GM18951 (cell line): ENCODE measurements at regions of chr3 and their contacts with region 1.

Region 1: DNA sequence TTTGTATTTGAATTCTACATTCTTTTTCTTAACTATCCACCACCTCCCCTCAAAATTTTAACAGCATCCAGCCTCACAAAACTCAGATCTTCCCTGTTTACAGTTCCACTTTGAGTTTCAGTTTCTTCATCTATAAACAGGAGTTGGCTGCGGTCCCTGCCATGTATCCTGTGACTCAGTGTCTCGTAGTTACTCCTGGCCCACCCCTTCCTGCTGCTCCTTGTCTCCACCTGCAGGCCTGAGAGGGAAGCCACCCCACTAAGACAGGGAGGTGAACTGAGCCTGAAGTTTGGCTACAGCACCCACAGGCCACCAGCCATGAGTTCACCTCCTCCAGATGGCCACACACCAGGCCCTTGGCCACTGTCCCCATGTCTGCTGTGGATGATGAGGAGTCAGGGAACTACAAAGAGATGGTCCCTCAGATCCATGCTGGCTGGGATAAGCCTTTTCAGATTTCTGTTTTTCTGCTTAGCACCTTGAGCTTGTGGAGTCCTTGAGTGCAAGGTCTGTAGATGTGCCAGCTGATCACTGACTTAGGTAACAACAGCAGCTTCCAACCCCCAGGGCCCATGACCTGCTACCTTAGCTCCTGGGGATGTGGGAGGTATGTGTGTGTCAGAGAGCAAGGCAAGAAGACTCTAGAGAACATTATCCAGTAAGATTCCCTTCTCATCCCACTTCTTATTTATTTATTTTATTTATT is 37.5 kb downstream of the CD86 start:
- POLR2A ChIP-seq: no peak

Region 2: DNA sequence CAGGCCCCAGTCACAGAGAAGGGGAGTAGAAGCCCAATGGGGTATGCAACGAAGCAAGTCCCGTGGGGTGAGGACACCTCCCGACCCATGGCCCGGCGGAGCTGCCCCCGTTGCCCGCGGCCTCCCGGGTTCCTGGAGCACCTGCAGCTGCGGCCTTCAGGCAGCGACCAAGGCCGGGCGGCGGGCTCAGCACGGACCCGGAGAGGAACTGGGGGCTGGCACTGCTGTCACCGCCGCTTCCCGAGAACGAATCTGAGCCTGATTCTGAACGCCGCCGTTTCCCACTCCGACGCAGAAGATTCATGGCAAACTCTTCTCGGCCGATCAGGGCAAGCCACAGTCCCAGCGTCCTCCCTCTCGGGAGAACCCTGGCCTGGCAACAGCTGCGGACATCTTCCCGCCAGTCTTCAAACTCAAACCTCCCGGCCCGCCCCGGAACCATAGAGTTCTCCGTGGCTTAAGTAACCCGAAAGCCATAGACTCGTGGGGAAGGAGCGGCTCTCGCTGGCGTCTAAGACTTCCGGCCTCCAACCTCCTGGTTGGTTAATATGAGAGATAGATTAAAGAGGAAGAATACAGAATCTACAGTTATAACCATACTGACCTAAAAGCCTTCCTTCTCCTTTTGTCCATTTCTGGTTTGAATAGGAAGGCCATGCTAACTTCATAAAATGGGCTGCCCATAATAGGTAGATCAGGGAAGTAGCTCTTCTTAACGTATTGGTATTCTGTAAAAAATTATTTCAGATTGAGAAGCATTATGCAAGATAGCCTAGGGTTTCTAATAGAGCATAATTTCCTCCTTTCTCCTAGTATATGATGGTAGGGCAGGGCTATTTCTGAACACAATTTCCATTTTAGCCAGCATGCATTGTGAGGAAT is 546.8 kb before region 1 on chr3 and contains the start of gene POLQ:
- in situ Hi-C with region 1: loop called (anchors 25 kb)
- POLR2A ChIP-seq: peak; percentile 77